ENCODE measurements at regions of chr21 and their contacts with region 1.

Region 1: DNA sequence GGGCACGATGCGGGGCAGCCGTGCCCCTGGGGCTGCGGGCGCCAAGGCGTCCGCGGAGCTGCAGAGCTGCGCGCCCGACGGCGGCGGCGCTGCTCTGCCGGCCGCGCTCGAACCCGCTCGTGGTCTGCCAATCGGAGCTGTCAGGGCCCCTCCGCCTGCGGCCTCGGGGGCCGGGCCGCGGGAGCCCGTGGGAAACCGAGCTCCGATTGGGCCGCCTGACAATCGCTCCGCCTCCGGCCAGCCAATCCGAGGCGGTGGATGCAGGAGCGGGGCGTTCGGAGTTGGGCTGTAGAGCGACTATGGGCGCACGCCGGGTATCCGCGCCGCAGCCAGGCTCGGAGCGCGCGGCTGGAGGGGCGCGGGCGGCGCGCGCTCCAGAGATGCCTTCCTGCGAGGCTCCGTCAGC is 100.5 kb upstream of the SOD1 start:
- DNase-seq: peak; percentile 95
- H3K4me3 Mint-ChIP-seq: peak overlapping the region; percentile 85
- H3K27ac Mint-ChIP-seq: no peak overlapping the region
- H3K4me1 Mint-ChIP-seq: peaks cover 30% of the 10 kb centered on the region
- H3K27me3 Mint-ChIP-seq: peaks cover 22% of the 10 kb centered on the region

Region 2: DNA sequence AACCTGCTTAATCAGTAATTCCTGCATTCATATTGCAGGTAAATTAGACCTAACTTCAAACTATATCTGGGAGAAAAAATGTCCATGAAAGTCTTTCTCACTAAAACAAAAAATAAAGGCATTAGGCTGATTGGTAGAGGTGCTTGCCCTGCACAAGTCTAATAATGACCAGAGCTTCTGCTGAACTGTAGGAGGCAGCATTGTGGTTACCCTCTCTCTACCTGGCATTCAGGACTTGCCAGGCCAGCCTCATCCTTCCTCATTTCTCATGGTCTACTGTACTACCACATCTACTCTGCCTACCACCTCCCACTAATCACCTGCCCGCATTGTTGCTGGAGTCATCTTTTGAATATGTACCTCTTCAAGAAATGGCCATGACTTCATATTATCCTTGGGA is 616.8 kb before region 1 on chr21:
- CTCF ChIA-PET with region 1: no interaction called
- POLR2A ChIA-PET with region 1: no interaction called
- intact Hi-C with region 1: no loop called
- DNase-seq: no peak
- H3K4me3 Mint-ChIP-seq: no peak overlapping the region
- H3K27ac Mint-ChIP-seq: no peak overlapping the region
- H3K4me1 Mint-ChIP-seq: no peaks in the 10 kb centered on the region
- H3K27me3 Mint-ChIP-seq: peaks cover 1% of the 10 kb centered on the region

Region 3: DNA sequence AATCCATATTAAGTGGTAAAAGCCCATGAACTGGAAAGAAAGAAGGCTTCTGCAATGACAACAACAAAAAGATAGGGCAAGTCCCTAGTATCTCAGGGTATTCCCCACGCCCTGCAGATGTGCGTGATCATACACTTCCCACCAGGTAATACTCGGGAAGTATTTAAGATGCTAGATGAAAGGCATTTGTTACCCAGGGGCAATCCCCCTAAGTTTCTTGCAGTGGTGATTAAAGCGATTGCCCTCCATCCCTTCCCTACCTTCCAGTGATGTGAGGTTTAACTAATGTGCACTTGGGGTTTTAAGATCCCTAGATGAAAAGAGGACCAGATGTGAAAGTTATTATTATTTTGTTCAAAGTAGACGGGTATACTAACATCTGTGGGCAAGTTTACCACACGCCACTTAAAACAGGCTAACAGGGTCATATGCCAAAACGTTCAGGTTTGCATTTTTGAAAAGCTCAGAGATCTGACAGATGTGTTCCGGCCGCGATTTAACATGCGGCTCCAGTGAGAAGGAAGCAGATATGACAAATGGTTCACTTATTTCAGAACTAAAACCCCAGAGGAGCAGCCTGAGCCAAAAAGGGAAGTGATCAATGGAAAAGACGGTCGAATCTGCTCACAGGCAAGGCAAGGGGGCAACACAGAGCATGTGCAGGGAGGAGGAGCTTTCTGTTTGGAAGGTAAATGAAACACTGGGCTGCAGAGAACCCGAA is 232.3 kb before region 1 on chr21:
- CTCF ChIA-PET with region 1: interaction called, 4 read pairs
- POLR2A ChIA-PET with region 1: interaction called, 3 read pairs
- intact Hi-C with region 1: loop called (anchors 1 kb)
- DNase-seq: peak; percentile 81
- H3K4me3 Mint-ChIP-seq: peak overlapping the region; percentile 47
- H3K27ac Mint-ChIP-seq: peak overlapping the region; percentile 88
- H3K4me1 Mint-ChIP-seq: peaks cover 30% of the 10 kb centered on the region
- H3K27me3 Mint-ChIP-seq: no peaks in the 10 kb centered on the region

Region 4: GRCh38 chr21:31426235-31426797 is 132.6 kb before region 1 on chr21:
- CTCF ChIA-PET with region 1: no interaction called
- POLR2A ChIA-PET with region 1: interaction called, 4 read pairs
- intact Hi-C with region 1: loop called (anchors 2 kb)
- DNase-seq: no peak
- H3K4me3 Mint-ChIP-seq: no peak overlapping the region
- H3K27ac Mint-ChIP-seq: peak overlapping the region; percentile 25
- H3K4me1 Mint-ChIP-seq: peaks cover 8% of the 10 kb centered on the region
- H3K27me3 Mint-ChIP-seq: no peaks in the 10 kb centered on the region

Region 5: DNA sequence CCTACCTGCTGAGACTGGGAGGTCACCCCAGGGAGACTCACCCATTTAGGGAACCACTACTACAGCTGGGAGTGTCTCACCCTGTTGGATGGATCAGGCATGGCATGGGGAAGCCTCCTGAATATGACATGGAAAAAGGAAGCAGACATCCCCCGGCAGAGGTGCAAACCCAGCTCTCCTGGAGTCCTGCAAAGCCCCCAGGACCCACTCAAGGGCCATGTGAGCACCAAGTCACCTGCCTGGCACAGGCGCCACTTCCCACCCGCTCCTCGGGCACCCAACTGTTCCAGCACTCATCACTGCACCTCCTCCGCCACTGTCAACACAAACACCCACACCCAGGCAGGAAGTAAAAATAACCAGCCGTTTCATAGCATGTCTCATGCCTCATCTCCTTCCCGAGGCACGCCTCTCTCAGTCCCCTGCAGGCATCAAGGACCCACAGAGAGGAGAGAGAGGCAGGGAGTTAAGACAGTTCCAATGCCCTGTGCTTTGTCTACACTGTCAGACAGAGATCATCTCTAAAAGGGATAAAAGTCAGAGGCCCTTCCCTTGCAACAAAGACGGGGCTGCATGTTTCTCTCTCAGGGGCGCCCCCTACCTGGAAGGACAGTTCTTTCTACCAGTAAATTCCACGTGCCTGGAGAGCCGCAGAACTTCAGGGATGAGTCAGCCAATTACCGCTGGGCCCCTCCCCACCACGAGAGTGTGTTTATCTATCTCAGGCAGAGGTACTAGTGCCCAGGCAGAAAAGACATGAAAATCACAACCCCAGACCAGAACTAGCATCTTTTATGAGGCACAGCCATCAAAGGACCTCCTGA is 49.6 kb before region 1 on chr21:
- CTCF ChIA-PET with region 1: no interaction called
- POLR2A ChIA-PET with region 1: no interaction called
- intact Hi-C with region 1: loop called (anchors 1 kb)
- DNase-seq: peak; percentile 92
- H3K4me3 Mint-ChIP-seq: peak overlapping the region; percentile 44
- H3K27ac Mint-ChIP-seq: peak overlapping the region; percentile 60
- H3K4me1 Mint-ChIP-seq: peaks cover 24% of the 10 kb centered on the region
- H3K27me3 Mint-ChIP-seq: no peaks in the 10 kb centered on the region

Region 6: DNA sequence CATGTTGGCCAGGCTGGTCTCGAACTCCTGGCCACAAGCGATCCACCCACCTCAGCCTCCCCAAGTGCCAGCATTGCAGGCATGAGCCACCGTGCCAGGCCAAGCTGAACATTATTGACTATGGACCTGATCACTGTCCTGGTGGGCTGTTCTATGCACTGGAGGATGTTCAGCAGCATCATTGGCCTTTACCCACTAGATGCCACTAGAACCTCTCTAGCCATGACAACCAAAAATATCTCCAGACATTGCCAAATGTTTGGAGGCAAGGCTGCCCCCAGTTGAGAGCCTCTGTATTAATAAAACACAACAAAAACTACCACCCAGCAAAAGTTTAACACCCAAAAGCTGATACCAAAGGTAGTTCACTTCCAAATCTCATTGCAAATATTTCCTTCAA is 10.3 kb before region 1 on chr21:
- CTCF ChIA-PET with region 1: interaction called, 13 read pairs
- POLR2A ChIA-PET with region 1: no interaction called
- intact Hi-C with region 1: no loop called
- DNase-seq: no peak
- H3K4me3 Mint-ChIP-seq: no peak overlapping the region
- H3K27ac Mint-ChIP-seq: no peak overlapping the region
- H3K4me1 Mint-ChIP-seq: peaks cover 8% of the 10 kb centered on the region
- H3K27me3 Mint-ChIP-seq: peaks cover 1% of the 10 kb centered on the region

Region 7: DNA sequence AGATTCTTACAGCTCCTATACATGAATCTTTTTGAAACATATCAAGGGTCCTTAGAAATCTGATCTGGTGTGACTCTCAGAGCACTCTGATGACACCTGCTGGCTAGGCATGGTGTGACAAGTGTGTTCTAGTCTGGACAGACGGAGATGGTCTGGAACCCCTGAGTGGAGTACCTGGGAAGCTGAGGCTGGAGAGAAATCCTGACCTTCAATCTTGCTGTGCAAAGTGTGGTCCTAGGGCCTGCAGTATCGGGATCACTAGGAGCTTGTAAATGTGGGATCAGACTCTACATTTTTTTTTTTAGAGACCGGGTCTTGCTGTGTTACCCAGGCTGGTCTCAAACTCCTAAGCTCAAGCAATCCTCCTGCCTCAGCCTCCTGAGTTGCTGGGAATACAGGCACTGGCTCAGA is 21.9 kb after region 1 on chr21:
- CTCF ChIA-PET with region 1: interaction called, 23 read pairs
- POLR2A ChIA-PET with region 1: no interaction called
- intact Hi-C with region 1: no loop called
- DNase-seq: peak; percentile 84
- H3K4me3 Mint-ChIP-seq: no peak overlapping the region
- H3K27ac Mint-ChIP-seq: no peak overlapping the region
- H3K4me1 Mint-ChIP-seq: peaks cover 4% of the 10 kb centered on the region
- H3K27me3 Mint-ChIP-seq: peaks cover 3% of the 10 kb centered on the region

Region 8: DNA sequence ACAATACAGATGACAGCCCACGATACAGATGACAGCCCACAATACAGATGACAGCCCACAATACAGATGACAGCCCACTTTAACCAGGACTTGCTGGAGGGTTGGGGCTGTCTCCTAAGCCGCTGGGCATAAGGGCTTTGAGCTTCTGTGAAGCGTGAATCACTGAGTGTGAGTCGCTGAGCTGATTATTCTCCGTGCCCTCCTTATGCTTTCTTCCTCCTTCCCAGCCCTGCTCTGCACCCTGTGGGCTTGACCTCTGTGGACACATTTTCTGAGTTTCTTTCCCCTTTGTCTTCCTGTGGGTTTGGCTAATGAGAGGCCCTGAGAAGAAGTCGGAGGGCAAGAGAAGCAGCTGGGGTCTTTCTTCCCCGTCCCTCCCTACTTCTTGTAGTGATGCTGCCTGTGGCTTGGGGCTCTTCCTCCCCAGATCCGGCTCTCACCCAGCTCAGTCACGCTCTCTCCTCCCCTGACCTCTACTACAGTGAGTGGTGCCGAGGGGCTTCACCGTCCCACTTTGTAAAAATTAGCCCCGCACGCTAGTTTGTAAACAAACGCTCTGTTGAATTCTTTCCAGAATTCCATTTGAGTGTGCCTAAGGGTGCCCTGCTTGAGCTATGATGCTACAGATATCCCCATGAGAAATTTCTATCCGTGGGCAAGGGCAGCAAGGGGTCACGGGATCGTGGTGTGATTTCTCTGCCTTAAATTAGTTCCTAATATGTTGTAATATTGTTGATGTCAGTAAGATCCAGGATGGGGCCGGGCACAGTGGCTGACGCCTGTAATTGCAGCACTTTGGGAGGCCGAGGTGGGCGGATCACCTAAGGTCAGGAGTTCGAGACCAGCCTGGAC is 54.2 kb after region 1 on chr21:
- CTCF ChIA-PET with region 1: no interaction called
- POLR2A ChIA-PET with region 1: no interaction called
- intact Hi-C with region 1: no loop called
- DNase-seq: no peak
- H3K4me3 Mint-ChIP-seq: no peak overlapping the region
- H3K27ac Mint-ChIP-seq: no peak overlapping the region
- H3K4me1 Mint-ChIP-seq: no peaks in the 10 kb centered on the region
- H3K27me3 Mint-ChIP-seq: peaks cover 21% of the 10 kb centered on the region

Region 9: GRCh38 chr21:31659536-31660258 is 100.7 kb after region 1 on chr21 and contains the start of gene SOD1:
- CTCF ChIA-PET with region 1: no interaction called
- POLR2A ChIA-PET with region 1: no interaction called
- intact Hi-C with region 1: loop called (anchors 1 kb)
- DNase-seq: peak; percentile 96
- H3K4me3 Mint-ChIP-seq: peak within 1 kb of the TSS; percentile 98
- H3K27ac Mint-ChIP-seq: peak within 1 kb of the TSS; percentile 99
- H3K4me1 Mint-ChIP-seq: peaks cover 65% of the 10 kb centered on the region
- H3K27me3 Mint-ChIP-seq: no peaks in the 10 kb centered on the region
- total RNA-seq, gene SOD1: 280 to 286 TPM